Right ventricle myocardium inferior (tissue), 1 donor: ENCODE measurements at regions of chr21 and their contacts with region 1.

Region 1: GRCh38 chr21:28636988-28637691 is 355.5 kb downstream of the LTN1 start:
- DNase-seq: no peak
- ATAC-seq: no peak

Region 2: DNA sequence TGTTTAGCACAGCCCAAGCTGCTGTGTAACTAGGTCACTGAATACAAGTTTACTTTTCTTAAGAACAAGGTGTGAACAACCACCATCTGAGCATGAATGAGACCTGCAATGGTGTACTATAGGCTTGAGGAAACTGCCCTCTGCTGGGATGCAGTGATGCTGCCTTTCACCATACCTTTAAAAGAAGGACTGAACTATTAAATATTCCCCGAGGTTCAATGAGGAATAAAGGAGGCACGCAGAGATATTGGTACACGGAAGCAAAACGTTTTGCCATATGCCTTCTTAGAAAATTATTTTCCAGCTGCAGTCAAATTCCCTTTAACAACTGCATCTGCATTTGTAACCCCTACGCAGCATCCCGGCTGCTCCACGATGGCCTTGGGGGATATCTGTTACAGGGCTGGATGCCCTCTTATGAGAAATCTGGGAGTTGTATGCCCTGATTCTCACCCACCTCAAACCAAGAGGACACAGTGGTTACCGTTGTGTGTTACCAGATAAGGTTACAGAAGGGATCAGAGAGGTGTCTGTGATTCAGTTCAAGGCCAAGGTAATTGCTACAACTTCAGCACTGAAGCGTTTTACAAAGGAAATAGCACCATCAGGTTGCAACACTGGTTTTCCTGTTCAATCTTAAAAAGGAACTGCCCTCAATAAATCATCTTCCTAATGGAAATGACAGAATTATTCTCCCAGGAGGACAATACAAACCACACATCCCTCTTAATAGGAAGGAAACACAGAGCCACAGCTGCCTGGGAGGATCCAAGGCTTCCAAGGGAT is 114.9 kb before region 1 on chr21:
- intact Hi-C with region 1: loop called (anchors 5 kb)
- DNase-seq: no peak
- ATAC-seq: peak; percentile 13

Region 3: DNA sequence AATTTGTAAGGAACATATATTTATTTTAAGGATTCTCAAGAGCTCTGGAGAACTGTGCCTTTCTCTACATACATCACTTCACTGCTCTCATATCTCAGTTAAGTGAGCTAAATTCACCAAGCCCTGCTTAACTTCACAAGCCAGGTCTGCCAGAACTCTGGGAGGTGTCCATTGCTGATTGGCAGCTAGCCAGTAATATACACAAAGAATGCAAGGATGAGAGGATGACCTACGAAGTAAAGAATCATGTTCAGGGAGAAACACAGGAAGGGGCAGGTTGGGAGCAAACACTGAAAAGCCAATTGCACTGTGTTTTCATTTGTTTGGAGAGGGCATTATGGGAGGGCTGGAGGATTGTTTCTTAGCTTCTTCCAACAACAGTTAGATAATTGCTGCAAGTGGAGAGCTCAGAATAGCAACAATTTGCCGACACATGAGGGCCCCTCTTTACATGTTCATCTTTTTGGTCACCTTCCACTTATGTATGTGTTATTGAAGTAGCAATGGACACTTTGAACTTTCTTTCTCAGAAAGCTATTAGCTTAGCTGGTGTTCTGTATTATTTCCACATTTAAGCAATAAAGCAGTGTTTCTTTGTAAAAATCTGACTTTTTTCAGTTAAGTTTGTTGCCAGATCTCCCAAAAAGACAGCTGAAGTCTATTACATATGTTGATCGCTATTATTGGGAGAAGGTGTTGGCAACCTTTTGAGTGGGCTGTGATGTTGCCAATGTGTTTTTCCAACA is 100.7 kb after region 1 on chr21:
- intact Hi-C with region 1: loop called (anchors 5 kb)
- DNase-seq: no peak
- ATAC-seq: peak; percentile 67